ENCODE measurements at regions of chr7 and their contacts with region 1.

Region 1: DNA sequence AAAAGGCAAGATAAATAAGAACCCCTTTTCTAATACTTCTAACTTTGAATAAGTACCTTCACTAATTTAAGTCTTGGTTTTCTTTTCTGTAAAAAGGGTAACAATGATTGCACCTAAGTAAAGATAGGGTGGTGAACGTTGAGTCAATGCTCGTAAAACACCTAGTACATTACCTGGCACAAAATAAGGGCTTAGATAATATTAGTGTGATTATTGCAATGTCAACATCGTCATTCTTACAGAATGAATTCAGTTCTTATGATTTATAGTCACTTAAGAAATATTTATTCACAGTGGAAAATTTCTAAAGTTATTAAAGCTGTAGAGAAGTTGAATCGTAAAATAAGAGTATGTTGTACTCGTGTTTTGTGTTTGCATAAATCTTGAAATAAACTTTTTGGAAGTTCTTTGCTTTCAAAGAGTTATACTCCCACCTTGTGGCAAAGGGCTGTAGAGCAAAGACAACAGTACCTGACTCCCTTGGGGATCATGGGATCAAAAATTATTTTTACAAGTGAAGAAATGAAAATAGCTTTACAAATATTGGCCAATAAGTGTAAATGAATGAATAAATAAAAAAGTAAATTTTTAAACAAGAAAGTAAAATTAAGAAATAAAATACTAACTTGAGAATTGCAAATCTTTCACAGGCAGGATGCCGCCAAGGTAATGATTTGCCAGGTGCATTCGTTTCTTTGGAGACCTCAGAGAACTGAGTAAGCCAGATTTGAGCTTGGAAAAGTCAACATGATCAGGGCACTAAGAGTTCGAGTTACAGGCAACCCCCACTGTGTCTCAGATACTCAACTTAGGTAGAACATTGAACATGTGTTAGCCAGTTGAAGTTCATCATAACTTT is 285.8 kb upstream of the CACNA2D1 start:
- DNase-seq: no peak
- H3K4me3 ChIP-seq: no peak overlapping the region
- CTCF ChIP-seq: peak; percentile 41

Region 2: DNA sequence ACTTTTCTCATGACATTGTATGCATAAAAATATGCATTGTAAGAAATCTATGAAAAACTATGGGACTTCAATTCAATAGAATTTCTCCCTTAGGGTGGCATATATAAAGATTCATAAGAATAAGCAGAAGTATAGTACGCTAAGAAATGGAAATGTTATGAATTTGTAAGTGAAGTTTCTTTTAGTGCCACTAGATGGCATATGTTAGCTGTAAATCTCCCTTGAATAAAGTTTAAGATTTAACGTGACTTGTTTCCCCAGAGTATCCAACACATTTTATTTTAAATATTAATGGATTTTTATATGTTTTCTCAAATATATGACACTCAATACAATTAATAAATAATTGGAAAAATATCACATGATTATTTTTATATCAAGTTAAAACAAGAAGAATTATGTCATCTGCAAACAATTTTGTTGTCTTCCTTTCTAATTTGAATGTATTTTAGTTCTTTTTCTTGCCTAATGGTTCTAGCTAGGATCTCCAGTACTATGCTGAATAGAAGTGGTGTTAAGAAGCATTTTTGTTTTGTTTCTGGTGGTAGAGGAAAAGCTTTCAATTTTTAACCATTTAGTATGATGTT is 1246.7 kb before region 1 on chr7:
- CTCF ChIA-PET with region 1: interaction called, 57 read pairs
- POLR2A ChIA-PET with region 1: no interaction called
- DNase-seq: no peak
- H3K4me3 ChIP-seq: no peak overlapping the region
- CTCF ChIP-seq: peak; percentile 3

Region 3: GRCh38 chr7:82715344-82715743 is 14.1 kb before region 1 on chr7:
- CTCF ChIA-PET with region 1: interaction called, 14 read pairs
- POLR2A ChIA-PET with region 1: no interaction called
- DNase-seq: no peak
- H3K4me3 ChIP-seq: no peak overlapping the region
- CTCF ChIP-seq: no peak

Region 4: GRCh38 chr7:82740246-82740848 is 10.9 kb after region 1 on chr7:
- CTCF ChIA-PET with region 1: interaction called, 37 read pairs
- POLR2A ChIA-PET with region 1: no interaction called
- DNase-seq: no peak
- H3K4me3 ChIP-seq: no peak overlapping the region
- CTCF ChIP-seq: peak; percentile 62

Region 5: GRCh38 chr7:82789867-82790609 is 60.6 kb after region 1 on chr7:
- CTCF ChIA-PET with region 1: no interaction called
- POLR2A ChIA-PET with region 1: no interaction called
- DNase-seq: peak; percentile 44
- H3K4me3 ChIP-seq: no peak overlapping the region
- CTCF ChIP-seq: no peak